Posterior vena cava (tissue), 2 donors: ENCODE measurements at regions of chr11 and their contacts with region 1.

Region 1: DNA sequence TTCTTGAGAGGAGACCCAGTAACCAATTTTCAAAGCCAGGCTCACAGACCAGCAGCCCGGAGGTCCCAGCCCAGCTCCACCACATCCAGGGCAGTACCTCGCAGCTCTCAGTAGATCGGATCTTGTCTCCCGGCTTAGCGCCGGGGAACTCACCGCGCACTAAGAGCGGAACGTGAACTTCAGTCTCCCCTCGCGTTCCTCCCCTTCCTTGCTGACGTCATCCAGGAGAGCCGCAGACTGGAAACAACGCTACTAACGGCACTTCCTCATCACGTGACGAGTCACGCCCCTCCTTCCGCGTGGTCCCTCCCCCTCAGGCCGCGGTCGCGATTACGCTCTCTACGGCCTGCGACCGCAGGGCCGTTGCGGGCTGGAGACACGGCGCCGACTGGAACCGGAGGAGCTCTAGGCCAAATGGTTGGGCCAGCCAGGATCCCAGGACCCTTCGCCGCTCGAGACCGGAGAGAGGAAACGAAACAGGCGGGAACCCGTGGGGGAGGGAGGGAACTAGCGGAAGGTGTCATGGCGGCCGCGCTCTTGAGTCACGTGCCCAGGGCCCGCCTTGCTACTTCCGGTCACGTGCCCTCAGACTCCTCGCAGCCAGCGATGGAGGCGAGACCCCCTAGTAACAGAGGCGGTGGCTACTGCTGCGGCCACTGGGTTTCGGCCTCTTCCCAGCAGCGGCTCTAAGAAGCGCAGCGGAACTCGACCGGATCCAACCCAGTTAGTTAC is at the starts of genes GTF2H1 and HPS5:
- DNase-seq: peak; percentile 98
- total RNA-seq, gene GTF2H1: 38.6 to 39.1 TPM
- total RNA-seq, gene HPS5: 12.8 to 16.4 TPM

Region 2: GRCh38 chr11:17864478-17864941 is 457.6 kb before region 1 on chr11:
- intact Hi-C with region 1: no loop called
- DNase-seq: no peak

Region 3: DNA sequence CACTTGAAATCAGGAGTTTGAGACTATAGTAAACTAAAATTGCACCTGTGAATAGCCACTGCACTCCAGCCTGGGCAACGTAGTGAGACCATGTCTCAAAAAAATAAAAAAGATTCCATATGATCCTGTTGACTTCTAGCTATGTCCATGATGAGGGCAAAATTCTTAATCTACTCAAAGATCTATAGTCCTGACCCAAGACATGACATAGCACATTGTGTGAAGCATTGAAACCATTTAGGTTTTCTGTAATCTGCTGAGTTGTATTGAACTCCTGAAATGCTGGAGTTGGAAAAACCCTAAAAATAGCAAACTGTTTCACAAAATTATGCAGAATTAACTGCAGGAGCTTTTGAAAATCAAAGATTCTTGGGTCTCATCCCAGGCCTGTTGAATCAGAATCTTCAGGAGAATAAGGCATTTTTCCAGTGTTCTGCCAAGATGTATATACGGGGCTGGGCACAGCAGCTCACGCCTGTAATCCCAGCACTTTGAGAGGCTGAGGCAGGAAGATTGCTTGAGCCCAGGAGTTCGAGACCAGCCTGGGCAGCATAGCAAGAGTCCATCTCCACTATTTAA is 42.4 kb after region 1 on chr11:
- intact Hi-C with region 1: loop called in 1 of 2 experiments (anchors 1 kb)
- DNase-seq: no peak

Region 4: DNA sequence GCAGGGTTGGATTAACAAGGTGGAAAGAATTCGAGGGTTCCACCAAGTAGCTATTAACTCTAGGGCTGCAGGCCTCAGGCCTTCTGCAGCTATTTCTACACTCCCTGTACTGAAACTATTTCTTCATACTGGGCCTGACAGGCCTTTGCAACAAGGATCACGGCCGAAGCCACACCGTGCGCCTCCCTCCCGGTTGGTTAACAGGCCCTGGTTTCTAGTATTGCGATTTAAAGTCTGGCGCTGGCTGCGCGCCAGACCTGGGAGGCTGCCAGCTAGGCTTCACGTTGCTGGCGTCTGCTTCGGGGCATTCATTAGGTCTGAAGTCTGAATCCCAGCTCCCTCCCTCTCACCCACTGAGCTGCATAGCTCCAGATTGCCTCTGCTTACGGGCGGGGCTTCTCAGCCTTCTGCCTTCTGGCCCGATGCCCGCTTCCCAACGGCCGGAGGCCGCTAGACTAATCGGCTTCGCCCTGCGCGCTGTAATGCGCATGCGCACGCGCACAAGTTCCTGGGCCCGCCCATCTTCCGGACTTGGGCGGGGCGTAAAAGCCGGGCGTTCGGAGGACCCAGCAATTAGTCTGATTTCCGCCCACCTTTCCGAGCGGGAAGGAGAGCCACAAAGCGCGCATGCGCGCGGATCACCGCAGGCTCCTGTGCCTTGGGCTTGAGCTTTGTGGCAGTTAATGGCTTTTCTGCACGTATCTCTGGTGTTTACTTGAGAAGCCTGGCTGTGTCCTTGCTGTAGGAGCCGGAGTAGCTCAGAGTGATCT is 73.8 kb after region 1 on chr11:
- intact Hi-C with region 1: loop called (anchors 10 kb)
- DNase-seq: peak; percentile 99

Region 5: DNA sequence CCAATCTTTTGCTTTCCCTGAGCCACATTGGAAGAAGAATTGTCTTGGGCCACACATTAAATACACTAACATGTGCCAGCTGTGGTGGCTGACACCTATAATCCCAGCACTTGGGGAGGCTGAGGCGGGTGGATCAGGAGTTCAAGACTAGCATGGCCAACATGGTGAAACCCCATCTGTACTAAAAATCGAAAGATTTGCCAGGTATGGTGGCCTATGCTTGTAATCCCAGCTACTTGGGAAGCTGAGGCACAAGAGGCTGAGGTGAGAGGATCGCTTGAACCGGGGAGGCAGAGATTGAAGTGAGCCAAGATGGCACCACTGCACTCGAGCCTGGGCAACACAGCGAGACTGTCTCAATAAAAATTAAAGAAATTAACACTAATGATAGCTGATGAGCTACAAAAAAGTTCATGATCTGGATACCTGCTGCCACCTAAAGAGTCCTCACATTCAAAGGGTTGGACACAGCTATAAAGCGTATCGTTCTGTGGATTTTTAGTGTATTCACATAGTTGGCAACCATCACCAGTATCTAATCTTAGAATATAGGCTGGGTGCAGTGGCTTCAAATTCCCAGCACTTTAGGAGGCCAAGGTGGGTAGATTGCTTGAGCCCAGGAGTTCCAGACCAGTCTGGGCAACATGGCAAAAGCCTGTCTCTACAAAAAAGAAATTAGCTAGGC is 86.6 kb after region 1 on chr11:
- intact Hi-C with region 1: loop called in 1 of 2 experiments (anchors 10 kb)
- DNase-seq: no peak